B cell (primary cell): ENCODE measurements at regions of chr9 and their contacts with region 1.

Region 1: GRCh38 chr9:127450830-127451724 is at the starts of genes LRSAM1 and RPL12:
- DNase-seq: peak; percentile 98
- ATAC-seq: peak; percentile 79
- H3K4me3 ChIP-seq: peak within 1 kb of the TSS; percentile 73 to 92 (median 82)
- H3K4me3 Mint-ChIP-seq: peak within 1 kb of the TSS; percentile 97
- H3K27ac ChIP-seq: peak within 1 kb of the TSS; percentile 84 to 85
- H3K27ac Mint-ChIP-seq: peak within 1 kb of the TSS; percentile 98
- H3K4me1 ChIP-seq: peaks cover 28 to 46% of the 10 kb centered on the region in 2 donors
- H3K4me1 Mint-ChIP-seq: peaks cover 58% of the 10 kb centered on the region
- H3K27me3 ChIP-seq: no peaks in the 10 kb centered on the region
- H3K27me3 Mint-ChIP-seq: no peaks in the 10 kb centered on the region
- CTCF ChIP-seq: peak; percentile 26
- total RNA-seq, gene LRSAM1: 31.5 and 39.8 TPM in 2 replicates
- total RNA-seq, gene RPL12: 1,232 and 1,334 TPM in 2 replicates

Region 2: GRCh38 chr9:126939821-126940221 is 511.3 kb before region 1 on chr9:
- CTCF ChIA-PET with region 1: interaction called, 5 read pairs
- POLR2A ChIA-PET with region 1: no interaction called
- intact Hi-C with region 1: loop called (anchors 2 kb)
- DNase-seq: no peak
- ATAC-seq: no peak
- H3K4me3 ChIP-seq: no peak overlapping the region
- H3K4me3 Mint-ChIP-seq: no peak overlapping the region
- H3K27ac ChIP-seq: no peak overlapping the region
- H3K27ac Mint-ChIP-seq: no peak overlapping the region
- H3K4me1 ChIP-seq: no peaks in the 10 kb centered on the region
- H3K4me1 Mint-ChIP-seq: peaks cover 5% of the 10 kb centered on the region
- H3K27me3 ChIP-seq: no peaks in the 10 kb centered on the region
- H3K27me3 Mint-ChIP-seq: no peaks in the 10 kb centered on the region
- CTCF ChIP-seq: no peak

Region 3: DNA sequence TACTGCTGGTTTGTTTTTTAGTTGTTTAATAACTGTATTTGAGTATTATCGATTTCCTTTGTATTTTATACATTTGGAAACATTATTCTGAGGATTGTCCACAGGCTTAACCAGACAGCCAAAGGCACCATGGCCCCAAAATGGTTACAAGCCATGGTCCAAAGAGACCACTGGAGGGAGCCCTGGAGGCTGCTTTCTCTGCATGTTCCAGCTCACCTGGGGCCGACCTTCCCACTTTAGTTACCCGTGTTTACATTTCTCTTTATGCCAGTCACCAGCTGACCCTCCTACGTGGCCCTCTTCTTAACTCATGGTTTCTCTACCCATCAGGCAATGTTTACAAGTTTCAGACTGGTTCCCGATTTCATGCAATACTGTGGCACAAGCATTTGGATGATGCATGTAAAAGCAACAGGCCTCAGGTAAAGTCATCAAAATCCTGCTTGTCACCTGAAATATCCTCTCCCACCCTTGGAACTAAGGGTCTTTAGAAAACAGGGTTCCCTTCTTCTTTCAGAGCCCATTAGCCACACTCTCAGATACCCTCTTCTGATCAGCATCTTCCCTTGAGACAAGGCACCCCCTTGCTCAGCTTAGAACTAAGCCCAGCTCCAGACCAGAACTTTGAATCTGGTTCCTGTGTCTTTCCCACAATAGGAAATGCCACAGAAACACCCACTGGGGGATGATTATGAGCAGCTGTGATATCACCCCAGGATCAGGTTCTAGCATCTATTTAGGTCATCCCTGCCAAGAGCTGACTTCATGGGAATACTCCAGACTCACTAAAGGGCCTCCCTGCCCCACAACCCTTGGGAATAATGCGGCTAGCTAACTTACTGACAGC is 236.4 kb before region 1 on chr9:
- CTCF ChIA-PET with region 1: interaction called, 14 read pairs
- POLR2A ChIA-PET with region 1: no interaction called
- intact Hi-C with region 1: loop called (anchors 2 kb)
- DNase-seq: peak; percentile 73
- ATAC-seq: peak; percentile 85
- H3K4me3 ChIP-seq: no peak overlapping the region
- H3K4me3 Mint-ChIP-seq: no peak overlapping the region
- H3K27ac ChIP-seq: no peak overlapping the region
- H3K27ac Mint-ChIP-seq: no peak overlapping the region
- H3K4me1 ChIP-seq: peaks cover 0 to 3% of the 10 kb centered on the region in 2 donors
- H3K4me1 Mint-ChIP-seq: peaks cover 4% of the 10 kb centered on the region
- H3K27me3 ChIP-seq: no peaks in the 10 kb centered on the region
- H3K27me3 Mint-ChIP-seq: no peaks in the 10 kb centered on the region
- CTCF ChIP-seq: peak; percentile 85

Region 4: GRCh38 chr9:127244609-127245601 is 206.2 kb before region 1 on chr9:
- CTCF ChIA-PET with region 1: no interaction called
- POLR2A ChIA-PET with region 1: no interaction called
- intact Hi-C with region 1: loop called (anchors 1 kb)
- DNase-seq: peak; percentile 93
- ATAC-seq: peak; percentile 100
- H3K4me3 ChIP-seq: peak overlapping the region; percentile 50 to 77 (median 66)
- H3K4me3 Mint-ChIP-seq: peak overlapping the region; percentile 94
- H3K27ac ChIP-seq: peak overlapping the region in 1 of 2 donors; percentile 18
- H3K27ac Mint-ChIP-seq: peak overlapping the region; percentile 86
- H3K4me1 ChIP-seq: peaks cover 5 to 11% of the 10 kb centered on the region in 2 donors
- H3K4me1 Mint-ChIP-seq: peaks cover 11% of the 10 kb centered on the region
- H3K27me3 ChIP-seq: peaks cover 0 to 3% (median 0%) of the 10 kb centered on the region in 4 experiments
- H3K27me3 Mint-ChIP-seq: no peaks in the 10 kb centered on the region
- CTCF ChIP-seq: no peak

Region 5: DNA sequence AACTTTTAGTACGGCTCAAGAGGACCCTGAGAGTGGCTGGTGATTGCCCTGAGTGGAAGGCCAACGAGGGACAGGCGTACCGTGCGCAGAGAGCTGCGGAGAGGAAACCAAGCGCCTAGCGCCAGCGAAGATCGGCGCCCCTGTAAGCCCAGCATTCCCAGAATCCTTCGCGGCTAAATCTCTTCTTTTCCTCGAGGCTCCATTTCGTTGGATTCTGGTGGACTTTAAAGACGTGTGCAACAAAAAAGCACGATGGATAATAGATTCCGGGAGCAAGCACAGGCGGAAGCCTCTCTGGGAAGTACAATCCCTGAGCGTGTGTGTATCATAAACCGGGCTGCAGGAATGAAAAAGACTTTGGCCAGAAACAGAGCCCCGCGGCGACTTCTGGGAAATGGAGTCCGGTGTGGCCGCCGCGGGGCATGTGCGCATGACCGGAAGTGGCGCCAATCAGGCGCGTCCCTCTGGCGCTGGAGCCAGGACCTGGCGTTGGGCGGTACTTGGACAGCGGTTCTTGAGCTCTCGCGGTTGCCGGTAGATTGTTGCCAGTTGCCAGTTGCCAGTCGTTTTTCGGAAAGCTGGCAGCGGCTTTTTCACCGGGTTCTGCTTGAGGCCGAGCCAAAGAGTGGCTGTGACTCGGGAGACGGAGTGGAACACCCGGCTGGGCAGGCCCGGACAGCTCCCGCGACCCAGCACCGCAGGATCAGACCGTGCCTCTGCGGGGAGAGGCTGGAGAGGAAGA is 27.0 kb before region 1 on chr9 and contains the start of gene ZNF79:
- CTCF ChIA-PET with region 1: interaction called, 5 read pairs
- POLR2A ChIA-PET with region 1: interaction called, 8 read pairs
- intact Hi-C with region 1: loop called (anchors 1 kb)
- DNase-seq: peak; percentile 93
- ATAC-seq: peak; percentile 94
- H3K4me3 ChIP-seq: peak within 1 kb of the TSS; percentile 73 to 97 (median 86)
- H3K4me3 Mint-ChIP-seq: peak within 1 kb of the TSS; percentile 99
- H3K27ac ChIP-seq: peak within 1 kb of the TSS; percentile 56 to 79
- H3K27ac Mint-ChIP-seq: peak within 1 kb of the TSS; percentile 95
- H3K4me1 ChIP-seq: peaks cover 19 to 25% of the 10 kb centered on the region in 2 donors
- H3K4me1 Mint-ChIP-seq: peaks cover 36% of the 10 kb centered on the region
- H3K27me3 ChIP-seq: no peaks in the 10 kb centered on the region
- H3K27me3 Mint-ChIP-seq: no peaks in the 10 kb centered on the region
- CTCF ChIP-seq: peak; percentile 9
- total RNA-seq, gene ZNF79: 16.1 and 17.7 TPM in 2 replicates

Region 6: DNA sequence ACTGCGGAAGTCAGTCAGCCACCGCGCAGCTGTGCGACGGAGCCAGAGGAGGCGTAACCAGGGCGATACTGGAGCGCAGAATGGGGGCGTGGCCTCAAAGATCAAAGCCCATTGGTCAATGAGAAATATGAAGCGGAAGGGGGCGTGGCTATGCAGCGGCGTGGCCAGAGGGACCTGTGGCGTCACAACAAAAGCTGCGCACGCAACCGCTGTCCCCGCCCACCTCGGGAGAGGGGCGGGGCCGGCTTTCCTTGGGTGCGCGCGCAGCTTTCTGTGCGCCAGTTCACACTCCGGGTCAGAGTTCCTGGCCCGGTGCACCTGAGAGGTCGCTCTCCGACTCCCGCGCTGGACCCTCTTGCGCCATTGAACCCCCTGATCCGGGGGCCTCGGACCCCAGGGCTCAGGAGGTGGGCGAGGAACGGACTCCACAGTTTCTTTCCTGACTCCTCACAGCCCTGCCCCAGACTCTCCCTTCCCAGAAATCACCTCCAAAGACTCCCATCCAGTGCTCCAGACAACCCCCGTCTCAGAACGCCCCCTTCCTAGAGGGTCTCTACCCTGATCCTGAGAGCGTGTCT is 825.0 kb after region 1 on chr9 and contains the starts of genes GOLGA2 and SWI5:
- CTCF ChIA-PET with region 1: no interaction called
- POLR2A ChIA-PET with region 1: no interaction called
- intact Hi-C with region 1: loop called (anchors 10 kb)
- DNase-seq: peak; percentile 100
- ATAC-seq: peak; percentile 93
- H3K4me3 ChIP-seq: peak within 1 kb of the TSS; percentile 61 to 99 (median 87)
- H3K4me3 Mint-ChIP-seq: peak within 1 kb of the TSS; percentile 96
- H3K27ac ChIP-seq: peak within 1 kb of the TSS; percentile 81 to 92
- H3K27ac Mint-ChIP-seq: peak within 1 kb of the TSS; percentile 97
- H3K4me1 ChIP-seq: peaks cover 14 to 20% of the 10 kb centered on the region in 2 donors
- H3K4me1 Mint-ChIP-seq: peaks cover 23% of the 10 kb centered on the region
- H3K27me3 ChIP-seq: no peaks in the 10 kb centered on the region
- H3K27me3 Mint-ChIP-seq: no peaks in the 10 kb centered on the region
- CTCF ChIP-seq: no peak
- total RNA-seq, gene GOLGA2: 76.3 and 87.3 TPM in 2 replicates
- total RNA-seq, gene SWI5: 8.6 and 13.3 TPM in 2 replicates